CD4-positive, alpha-beta T cell (primary cell): ENCODE measurements at regions of chrX and their contacts with region 1.

Region 1: DNA sequence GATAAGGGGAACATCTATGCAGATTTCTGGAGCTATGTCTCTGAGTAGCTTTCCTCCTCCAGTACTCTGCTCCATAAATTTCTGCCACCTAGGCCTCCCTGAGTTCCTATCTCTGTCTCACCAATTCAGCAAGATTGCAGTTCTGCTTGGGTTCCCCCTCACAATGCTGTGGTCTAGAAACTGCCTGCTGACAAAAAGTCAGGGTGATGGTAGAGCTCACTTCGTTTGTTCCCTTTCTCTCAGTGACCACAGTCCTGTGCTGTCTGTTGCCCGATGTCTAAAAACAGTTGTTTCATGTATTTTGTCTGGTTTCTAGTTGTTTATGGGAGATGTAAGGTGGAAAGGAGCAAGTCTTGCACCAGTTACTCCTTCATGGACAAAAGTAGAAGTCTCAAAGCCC is 41.1 kb downstream of the AMMECR1 start:
- DNase-seq: no peak
- ATAC-seq: no peak
- H3K4me3 ChIP-seq: no peak overlapping the region
- H3K4me3 Mint-ChIP-seq: no peak overlapping the region
- H3K27ac ChIP-seq: no peak overlapping the region
- H3K27ac Mint-ChIP-seq: no peak overlapping the region
- H3K4me1 ChIP-seq: no peaks in the 10 kb centered on the region
- H3K4me1 Mint-ChIP-seq: peaks cover 31% of the 10 kb centered on the region
- H3K27me3 ChIP-seq: no peaks in the 10 kb centered on the region
- H3K27me3 Mint-ChIP-seq: no peaks in the 10 kb centered on the region
- CTCF ChIP-seq: no peak

Region 2: GRCh38 chrX:110210417-110211139 is 66.2 kb before region 1 on chrX:
- CTCF ChIA-PET with region 1: no interaction called
- POLR2A ChIA-PET with region 1: no interaction called
- intact Hi-C with region 1: loop called in 1 of 2 experiments (anchors 10 kb)
- DNase-seq: no peak
- ATAC-seq: no peak
- H3K4me3 ChIP-seq: no peak overlapping the region
- H3K4me3 Mint-ChIP-seq: no peak overlapping the region
- H3K27ac ChIP-seq: no peak overlapping the region
- H3K27ac Mint-ChIP-seq: no peak overlapping the region
- H3K4me1 ChIP-seq: no peaks in the 10 kb centered on the region
- H3K4me1 Mint-ChIP-seq: peaks cover 13% of the 10 kb centered on the region
- H3K27me3 ChIP-seq: no peaks in the 10 kb centered on the region
- H3K27me3 Mint-ChIP-seq: no peaks in the 10 kb centered on the region
- CTCF ChIP-seq: no peak